ENCODE measurements at regions of chr6 and their contacts with region 1.

Region 1: DNA sequence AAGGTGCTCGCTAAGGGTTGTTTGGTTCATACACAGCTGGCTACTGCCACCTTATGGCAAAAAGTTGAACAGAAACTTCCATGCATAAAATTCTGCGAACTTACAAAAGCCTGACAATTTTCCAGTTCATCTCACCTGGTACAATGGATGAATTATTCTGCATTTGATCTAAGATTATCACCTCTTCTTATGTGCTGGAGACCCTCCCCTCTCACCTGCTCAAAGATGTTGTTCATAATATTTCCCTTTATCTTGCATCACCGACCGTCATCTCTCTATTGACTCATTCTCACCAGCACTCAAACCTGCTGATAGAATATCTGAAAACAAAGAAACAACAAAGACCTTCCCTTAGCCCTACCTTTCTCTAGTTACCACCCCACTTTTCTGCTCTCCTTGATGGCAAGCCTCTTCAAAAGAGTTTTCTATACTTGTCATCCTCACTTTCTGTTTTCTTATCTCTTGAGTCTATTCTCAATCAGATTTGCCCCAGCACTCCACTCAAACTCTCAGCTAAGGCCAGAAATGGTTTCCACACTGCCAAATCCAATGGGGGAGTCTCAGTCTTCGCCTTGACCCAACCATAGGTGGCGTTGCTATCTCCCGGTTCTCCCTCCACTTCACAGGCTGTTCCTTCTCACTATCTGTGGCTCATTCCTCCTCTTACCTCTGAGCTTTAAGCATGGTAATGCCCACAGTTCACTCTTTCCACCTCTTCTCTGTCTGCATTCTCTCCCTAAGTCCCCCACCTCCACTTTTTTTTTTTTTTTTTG is 25.8 kb downstream of the SNRNP48 start:
- H3K4me3 Mint-ChIP-seq: peak overlapping the region; percentile 27
- H3K27ac Mint-ChIP-seq: no peak overlapping the region
- H3K4me1 Mint-ChIP-seq: peaks cover 46% of the 10 kb centered on the region
- H3K27me3 Mint-ChIP-seq: peaks cover 12% of the 10 kb centered on the region

Region 2: GRCh38 chr6:6676910-6677441 is 938.8 kb before region 1 on chr6:
- intact Hi-C with region 1: loop called (anchors 10 kb)
- H3K4me3 Mint-ChIP-seq: no peak overlapping the region
- H3K27ac Mint-ChIP-seq: peak overlapping the region; percentile 67
- H3K4me1 Mint-ChIP-seq: peaks cover 45% of the 10 kb centered on the region
- H3K27me3 Mint-ChIP-seq: no peaks in the 10 kb centered on the region

Region 3: DNA sequence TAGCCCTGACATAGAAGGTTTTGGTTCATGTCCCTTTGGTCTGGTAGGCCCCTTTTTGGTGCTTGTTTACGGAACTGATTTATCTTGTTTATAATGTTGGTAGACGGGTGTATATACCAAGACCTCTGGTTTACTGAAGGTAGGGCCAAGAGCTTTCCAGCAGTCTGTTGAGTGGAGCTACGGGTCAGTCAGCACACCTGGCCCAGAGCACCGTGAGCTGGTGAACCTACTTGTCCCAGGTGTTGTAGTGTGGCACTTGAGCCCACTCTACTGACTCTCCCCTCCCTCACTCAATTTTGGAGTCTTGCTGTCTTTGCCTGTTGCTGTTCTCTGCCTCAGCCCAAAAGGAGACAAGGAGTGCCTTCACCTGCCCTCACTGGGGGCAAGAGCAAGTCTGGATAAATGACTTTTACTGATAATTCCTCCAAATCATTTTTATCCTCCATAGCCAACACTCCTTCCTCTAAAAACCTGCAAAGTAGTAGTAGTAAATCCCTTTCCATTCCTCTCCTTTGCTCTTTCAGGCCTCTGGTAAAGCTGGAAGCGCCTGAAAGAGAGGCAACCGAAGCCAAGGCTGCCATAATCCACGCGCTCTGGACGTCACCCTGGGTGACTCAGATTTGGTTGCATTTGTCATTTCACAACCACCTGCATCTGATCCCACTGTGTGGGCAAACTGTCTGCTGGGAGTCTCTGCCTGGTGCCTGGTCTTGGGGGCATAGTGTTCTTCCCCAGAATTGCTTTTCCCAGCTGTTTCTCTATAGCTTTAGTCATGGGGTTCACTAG is 485.8 kb before region 1 on chr6:
- intact Hi-C with region 1: no loop called
- H3K4me3 Mint-ChIP-seq: peak overlapping the region; percentile 26
- H3K27ac Mint-ChIP-seq: peak overlapping the region; percentile 78
- H3K4me1 Mint-ChIP-seq: peaks cover 79% of the 10 kb centered on the region
- H3K27me3 Mint-ChIP-seq: no peaks in the 10 kb centered on the region

Region 4: GRCh38 chr6:7276199-7276524 is 339.6 kb before region 1 on chr6:
- intact Hi-C with region 1: loop called (anchors 2 kb)
- H3K4me3 Mint-ChIP-seq: no peak overlapping the region
- H3K27ac Mint-ChIP-seq: peak overlapping the region; percentile 43
- H3K4me1 Mint-ChIP-seq: peaks cover 48% of the 10 kb centered on the region
- H3K27me3 Mint-ChIP-seq: no peaks in the 10 kb centered on the region

Region 5: DNA sequence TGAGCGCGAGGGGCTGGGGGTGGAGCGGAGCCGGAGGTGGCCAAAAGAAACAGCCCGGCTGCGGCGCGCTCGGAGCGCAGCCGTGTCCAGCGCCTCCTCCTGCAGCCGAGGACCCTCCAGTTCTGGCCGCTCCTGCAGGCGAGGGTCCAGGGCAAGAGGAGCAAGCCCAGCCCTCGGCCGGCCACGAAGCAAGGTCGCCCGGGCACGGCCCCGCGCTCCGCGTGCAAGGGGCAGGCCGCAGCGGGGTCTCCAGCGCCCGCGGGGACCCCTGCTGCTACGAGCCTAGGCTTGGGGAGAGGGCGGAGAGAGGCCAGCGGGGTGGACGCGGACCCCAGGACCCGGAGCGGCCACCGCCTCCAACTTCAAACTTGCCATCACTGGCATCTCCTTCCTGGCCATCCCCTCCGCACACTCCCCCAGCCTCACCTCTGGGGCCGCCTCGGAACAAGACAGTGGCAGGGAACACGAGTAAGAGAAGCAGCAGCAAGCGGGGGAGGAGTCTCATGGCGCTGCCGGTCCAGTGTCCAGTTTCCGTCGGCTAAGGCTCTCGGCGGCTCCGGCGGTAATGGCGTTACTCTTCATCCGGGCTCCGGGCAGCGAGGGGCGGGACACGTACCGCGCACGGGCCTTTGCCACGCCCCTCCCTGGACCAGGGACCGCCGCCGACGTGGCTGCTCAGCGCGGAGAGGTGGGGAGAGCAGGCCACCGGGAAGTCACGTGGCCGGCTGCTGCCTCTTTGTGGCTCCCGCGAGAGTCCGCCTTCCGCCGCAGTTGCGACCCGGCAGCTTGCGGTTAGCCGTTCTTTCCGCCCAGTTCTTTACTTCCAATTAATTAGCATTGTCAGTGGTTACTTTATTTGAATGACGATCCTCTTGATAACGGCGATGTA is 302.9 kb before region 1 on chr6 and contains the start of gene SSR1:
- intact Hi-C with region 1: loop called (anchors 5 kb)
- H3K4me3 Mint-ChIP-seq: peak within 1 kb of the TSS; percentile 93
- H3K27ac Mint-ChIP-seq: peak within 1 kb of the TSS; percentile 90
- H3K4me1 Mint-ChIP-seq: peaks cover 50% of the 10 kb centered on the region
- H3K27me3 Mint-ChIP-seq: no peaks in the 10 kb centered on the region

Region 6: GRCh38 chr6:7424967-7425807 is 190.6 kb before region 1 on chr6:
- intact Hi-C with region 1: loop called (anchors 1 kb)
- H3K4me3 Mint-ChIP-seq: no peak overlapping the region
- H3K27ac Mint-ChIP-seq: no peak overlapping the region
- H3K4me1 Mint-ChIP-seq: no peaks in the 10 kb centered on the region
- H3K27me3 Mint-ChIP-seq: no peaks in the 10 kb centered on the region

Region 7: GRCh38 chr6:8131256-8131897 is 515.6 kb after region 1 on chr6:
- intact Hi-C with region 1: no loop called
- H3K4me3 Mint-ChIP-seq: no peak overlapping the region
- H3K27ac Mint-ChIP-seq: no peak overlapping the region
- H3K4me1 Mint-ChIP-seq: peaks cover 16% of the 10 kb centered on the region
- H3K27me3 Mint-ChIP-seq: peaks cover 4% of the 10 kb centered on the region

Measured in dendritic cell treated with granulocyte-macrophage colony-stimulating factor and Interleukin-4, amounts not matched to agents 40 ng/mL and 50 ng/mL, for 4 days (primary cell).